ENCODE measurements at regions of chr1 and their contacts with region 1.

Region 1: DNA sequence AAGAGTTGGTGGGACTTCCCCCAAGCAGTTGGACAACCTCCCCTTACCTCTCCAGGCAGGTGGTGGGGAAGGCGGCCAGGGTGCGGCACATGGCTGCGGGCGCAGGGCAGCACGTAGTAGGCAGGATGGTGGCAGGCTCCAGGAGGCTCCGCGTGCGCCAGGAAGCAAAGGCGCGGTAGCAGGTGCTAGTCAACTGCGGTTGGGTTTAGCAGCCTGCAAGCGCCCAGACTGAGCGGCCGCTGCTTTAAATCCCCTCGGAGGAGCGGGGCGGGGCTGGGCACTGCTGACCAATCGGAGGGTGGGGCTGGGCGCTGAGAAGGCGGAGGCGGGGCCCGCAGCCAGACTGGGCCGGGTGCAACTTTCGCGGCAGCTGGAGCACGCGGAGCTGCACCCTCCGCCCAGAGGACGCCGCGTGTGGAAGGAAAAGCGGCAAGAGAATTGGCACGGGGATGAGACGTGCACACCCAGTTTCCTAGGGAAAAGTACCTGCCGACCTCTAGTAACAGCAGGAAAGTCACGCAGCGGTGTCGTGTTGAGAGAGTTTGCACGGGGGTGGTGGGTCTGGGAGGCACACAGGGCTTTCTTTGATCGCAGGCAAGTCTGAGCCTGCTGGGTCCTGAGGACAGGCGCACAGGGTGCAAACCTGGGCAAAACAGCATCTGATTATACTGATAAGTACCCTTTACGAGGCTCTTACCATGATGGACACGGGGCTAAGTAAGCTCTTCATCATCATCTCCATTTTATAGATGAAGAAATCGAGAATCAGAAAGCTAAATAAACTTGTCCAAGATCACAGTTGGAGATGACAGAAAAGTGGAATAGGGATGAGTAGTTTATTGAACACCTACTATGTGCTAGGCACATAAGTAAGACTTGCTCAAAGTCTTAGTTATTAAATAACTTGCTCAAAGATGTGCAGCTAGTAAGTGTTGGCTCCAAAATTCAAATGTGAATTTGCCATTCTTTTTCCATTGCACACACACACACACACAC is at the start of gene RGS16:
- DNase-seq: peak; percentile 81 to 89 (median 82)
- H3K4me3 ChIP-seq: peak within 1 kb of the TSS; percentile 36 to 39
- H3K4me3 Mint-ChIP-seq: peak within 1 kb of the TSS in 7 of 8 donors; percentile 81 to 91 (median 85)
- H3K27ac ChIP-seq: peak within 1 kb of the TSS; percentile 46
- H3K27ac Mint-ChIP-seq: peak within 1 kb of the TSS in 5 of 7 donors; percentile 36 to 95 (median 73)
- H3K4me1 ChIP-seq: peaks cover 41% of the 10 kb centered on the region
- H3K4me1 Mint-ChIP-seq: peaks cover 0 to 20% (median 12%) of the 10 kb centered on the region in 4 donors
- H3K27me3 ChIP-seq: no peaks in the 10 kb centered on the region
- H3K27me3 Mint-ChIP-seq: no peaks in the 10 kb centered on the region
- total RNA-seq, gene RGS16: 1.3 to 1.4 TPM

Region 2: GRCh38 chr1:182391362-182392044 is 213.0 kb before region 1 on chr1 and contains the start of gene GLUL:
- CTCF ChIA-PET with region 1: no interaction called
- POLR2A ChIA-PET with region 1: no interaction called
- intact Hi-C with region 1: loop called (anchors 10 kb)
- DNase-seq: peak; percentile 59 to 71 (median 61)
- H3K4me3 ChIP-seq: peak within 1 kb of the TSS; percentile 60 to 83
- H3K4me3 Mint-ChIP-seq: peak within 1 kb of the TSS; percentile 91 to 98 (median 94)
- H3K27ac ChIP-seq: peak within 1 kb of the TSS; percentile 48
- H3K27ac Mint-ChIP-seq: peak within 1 kb of the TSS; percentile 74 to 93 (median 89)
- H3K4me1 ChIP-seq: peaks cover 30% of the 10 kb centered on the region
- H3K4me1 Mint-ChIP-seq: peaks cover 20 to 42% (median 30%) of the 10 kb centered on the region in 4 donors
- H3K27me3 ChIP-seq: no peaks in the 10 kb centered on the region
- H3K27me3 Mint-ChIP-seq: peaks cover 1 to 2% of the 10 kb centered on the region in 2 donors
- total RNA-seq, gene GLUL: 78.5 to 96.0 TPM

Region 3: GRCh38 chr1:182588500-182589452 is 15.7 kb before region 1 on chr1 and contains the start of gene RNASEL:
- CTCF ChIA-PET with region 1: interaction called, 54 read pairs
- POLR2A ChIA-PET with region 1: interaction called, 27 read pairs
- intact Hi-C with region 1: loop called (anchors 1 kb)
- DNase-seq: peak; percentile 60 to 77 (median 71)
- H3K4me3 ChIP-seq: peak within 1 kb of the TSS; percentile 93 to 94
- H3K4me3 Mint-ChIP-seq: peak within 1 kb of the TSS; percentile 93 to 99 (median 96)
- H3K27ac ChIP-seq: peak within 1 kb of the TSS; percentile 98
- H3K27ac Mint-ChIP-seq: peak within 1 kb of the TSS; percentile 96 to 100 (median 99)
- H3K4me1 ChIP-seq: peaks cover 48% of the 10 kb centered on the region
- H3K4me1 Mint-ChIP-seq: peaks cover 36 to 61% (median 46%) of the 10 kb centered on the region in 4 donors
- H3K27me3 ChIP-seq: no peaks in the 10 kb centered on the region
- H3K27me3 Mint-ChIP-seq: no peaks in the 10 kb centered on the region
- total RNA-seq, gene RNASEL: 33.9 to 35.4 TPM

Region 4: GRCh38 chr1:182662121-182662890 is 57.8 kb after region 1 on chr1:
- CTCF ChIA-PET with region 1: no interaction called
- POLR2A ChIA-PET with region 1: no interaction called
- intact Hi-C with region 1: loop called (anchors 5 kb)
- DNase-seq: no peak
- H3K4me3 ChIP-seq: no peak overlapping the region
- H3K4me3 Mint-ChIP-seq: no peak overlapping the region
- H3K27ac ChIP-seq: no peak overlapping the region
- H3K27ac Mint-ChIP-seq: no peak overlapping the region
- H3K4me1 ChIP-seq: no peaks in the 10 kb centered on the region
- H3K4me1 Mint-ChIP-seq: peaks cover 0 to 4% (median 0%) of the 10 kb centered on the region in 4 donors
- H3K27me3 ChIP-seq: no peaks in the 10 kb centered on the region
- H3K27me3 Mint-ChIP-seq: peaks cover 0 to 10% of the 10 kb centered on the region in 2 donors

Region 5: DNA sequence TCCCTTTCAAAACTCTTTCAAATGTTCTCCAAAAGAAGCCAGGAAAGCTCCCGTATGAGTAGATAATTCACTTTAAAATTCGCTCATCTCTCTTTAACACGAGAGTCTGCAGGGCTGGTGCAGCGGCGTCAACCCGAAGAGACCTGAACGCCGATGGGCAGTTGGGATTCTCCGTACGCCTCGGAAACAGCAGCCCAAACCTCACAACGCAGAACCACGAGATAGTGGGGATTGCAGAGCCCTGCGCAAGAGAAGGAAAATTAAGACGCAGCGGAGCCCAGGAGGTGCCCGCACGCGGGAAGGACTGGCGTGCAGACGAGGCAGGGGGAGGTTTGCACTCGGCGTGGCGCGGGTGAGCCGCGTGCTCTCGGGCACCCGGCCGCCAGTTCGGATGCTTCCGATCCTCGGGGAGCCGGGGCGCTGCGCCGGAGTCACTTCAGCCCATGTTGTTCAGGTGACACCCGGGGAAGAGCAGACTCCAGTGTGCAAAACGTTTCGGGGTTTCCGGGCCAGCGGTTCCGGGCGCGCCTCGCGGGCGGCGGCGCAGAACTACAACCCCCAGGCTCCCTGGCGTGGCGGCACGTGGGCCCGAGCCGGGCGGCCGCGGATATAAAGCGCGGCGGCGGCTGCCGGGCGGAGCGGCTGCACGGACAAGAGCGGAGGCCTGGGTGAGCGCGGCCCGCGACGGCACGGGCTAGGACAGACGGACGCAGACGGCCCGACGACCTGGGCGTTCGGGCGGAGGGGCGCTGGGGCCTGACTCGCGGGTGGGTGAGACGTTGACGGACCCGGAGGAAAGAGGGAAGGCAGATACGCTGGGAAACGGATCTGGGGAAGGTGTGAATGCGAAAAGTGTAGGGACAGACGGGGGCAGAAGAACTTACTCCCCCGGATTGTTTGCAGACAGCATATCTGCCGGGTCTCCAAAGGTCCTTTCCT is 184.9 kb after region 1 on chr1 and contains the start of gene NPL:
- CTCF ChIA-PET with region 1: interaction called, 707 read pairs
- POLR2A ChIA-PET with region 1: interaction called, 15 read pairs
- intact Hi-C with region 1: loop called (anchors 1 kb)
- DNase-seq: peak; percentile 86 to 89 (median 88)
- H3K4me3 ChIP-seq: peak within 1 kb of the TSS; percentile 69 to 88
- H3K4me3 Mint-ChIP-seq: peak within 1 kb of the TSS; percentile 89 to 94 (median 92)
- H3K27ac ChIP-seq: peak within 1 kb of the TSS; percentile 67
- H3K27ac Mint-ChIP-seq: peak within 1 kb of the TSS; percentile 78 to 92 (median 90)
- H3K4me1 ChIP-seq: peaks cover 13% of the 10 kb centered on the region
- H3K4me1 Mint-ChIP-seq: peaks cover 10 to 16% (median 11%) of the 10 kb centered on the region in 4 donors
- H3K27me3 ChIP-seq: no peaks in the 10 kb centered on the region
- H3K27me3 Mint-ChIP-seq: no peaks in the 10 kb centered on the region
- total RNA-seq, gene NPL: 9.6 TPM

Region 6: GRCh38 chr1:183471743-183472487 is 867.4 kb after region 1 on chr1:
- CTCF ChIA-PET with region 1: no interaction called
- POLR2A ChIA-PET with region 1: no interaction called
- intact Hi-C with region 1: loop called (anchors 5 kb)
- DNase-seq: peak; percentile 96 to 99 (median 97)
- H3K4me3 ChIP-seq: peak overlapping the region; percentile 82 to 98
- H3K4me3 Mint-ChIP-seq: peak overlapping the region; percentile 90 to 99 (median 96)
- H3K27ac ChIP-seq: peak overlapping the region; percentile 91
- H3K27ac Mint-ChIP-seq: peak overlapping the region; percentile 99 to 100 (median 100)
- H3K4me1 ChIP-seq: peaks cover 39% of the 10 kb centered on the region
- H3K4me1 Mint-ChIP-seq: peaks cover 13 to 43% (median 19%) of the 10 kb centered on the region in 4 donors
- H3K27me3 ChIP-seq: no peaks in the 10 kb centered on the region
- H3K27me3 Mint-ChIP-seq: peaks cover 0 to 3% of the 10 kb centered on the region in 2 donors